ENCODE measurements at regions of chr22 and their contacts with region 1.

Region 1: GRCh38 chr22:40764763-40765441 is 54.2 kb downstream of the SLC25A17 start:
- DNase-seq: no peak
- H3K4me3 ChIP-seq: no peak overlapping the region
- H3K27ac ChIP-seq: no peak overlapping the region
- H3K4me1 ChIP-seq: no peaks in the 10 kb centered on the region
- H3K27me3 ChIP-seq: no peaks in the 10 kb centered on the region
- CTCF ChIP-seq: no peak
- EP300 ChIP-seq: no peak
- POLR2A ChIP-seq: no peak

Region 2: DNA sequence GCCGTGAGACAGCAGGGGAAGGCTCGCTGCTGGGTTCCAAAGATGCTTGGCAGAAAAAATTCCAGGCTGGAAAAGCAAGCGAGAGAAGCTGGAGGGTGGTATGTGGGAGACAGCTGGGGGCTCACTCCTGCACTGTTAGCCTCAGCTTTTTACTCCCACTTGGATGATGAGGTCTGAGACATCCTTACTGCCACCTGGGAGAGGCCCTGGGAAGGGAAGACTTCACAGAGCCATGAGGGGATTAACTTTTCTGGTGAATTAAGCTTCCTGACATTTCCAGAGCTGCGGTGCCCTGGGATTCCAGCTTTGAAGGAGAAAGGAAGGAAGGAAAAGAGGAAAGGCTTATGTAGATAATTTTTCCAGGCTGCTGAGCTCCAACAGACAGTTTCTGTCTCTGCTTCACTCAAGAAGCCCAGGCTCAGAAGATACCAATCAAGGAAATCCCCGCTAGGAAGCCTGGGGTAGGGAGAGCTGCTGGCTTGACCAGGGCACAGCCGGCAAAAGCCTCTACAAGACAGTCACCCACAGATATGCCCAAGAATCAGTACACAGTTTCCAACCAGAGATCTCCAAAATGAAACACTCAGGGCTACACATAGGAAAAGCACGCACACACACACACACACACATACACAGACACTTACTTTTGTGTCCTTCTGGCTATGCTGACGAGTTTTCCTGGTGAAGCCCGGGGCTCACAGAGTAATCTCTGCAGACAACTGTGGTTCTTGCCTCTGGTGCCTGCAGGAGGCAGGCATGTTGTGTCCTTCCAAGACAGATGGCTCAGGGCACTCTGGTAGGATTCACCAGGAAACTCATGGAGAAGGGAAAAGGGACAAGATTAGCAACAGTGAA is 84.7 kb before region 1 on chr22:
- in situ Hi-C with region 1: loop called in 1 of 4 experiments (anchors 5 kb)
- intact Hi-C with region 1: loop called (anchors 5 kb)
- DNase-seq: no peak
- H3K4me3 ChIP-seq: no peak overlapping the region
- H3K27ac ChIP-seq: no peak overlapping the region
- H3K4me1 ChIP-seq: peaks cover 0 to 21% (median 13%) of the 10 kb centered on the region in 4 donors
- H3K27me3 ChIP-seq: peaks cover 23% of the 10 kb centered on the region
- CTCF ChIP-seq: no peak
- EP300 ChIP-seq: no peak
- POLR2A ChIP-seq: no peak

Region 3: GRCh38 chr22:41403532-41404318 is 638.8 kb after region 1 on chr22:
- in situ Hi-C with region 1: no loop called
- intact Hi-C with region 1: no loop called
- DNase-seq: peak; percentile 89
- H3K4me3 ChIP-seq: no peak overlapping the region
- H3K27ac ChIP-seq: peak overlapping the region; percentile 6 to 57 (median 36)
- H3K4me1 ChIP-seq: peaks cover 15 to 23% (median 18%) of the 10 kb centered on the region in 4 donors
- H3K27me3 ChIP-seq: no peaks in the 10 kb centered on the region
- CTCF ChIP-seq: peak; percentile 95 to 98 (median 96)
- EP300 ChIP-seq: peak; percentile 29
- POLR2A ChIP-seq: no peak

Measured in transverse colon (tissue), 4 donors.